Tibial artery (tissue), 4 donors: ENCODE measurements at regions of chr2 and their contacts with region 1.

Region 1: DNA sequence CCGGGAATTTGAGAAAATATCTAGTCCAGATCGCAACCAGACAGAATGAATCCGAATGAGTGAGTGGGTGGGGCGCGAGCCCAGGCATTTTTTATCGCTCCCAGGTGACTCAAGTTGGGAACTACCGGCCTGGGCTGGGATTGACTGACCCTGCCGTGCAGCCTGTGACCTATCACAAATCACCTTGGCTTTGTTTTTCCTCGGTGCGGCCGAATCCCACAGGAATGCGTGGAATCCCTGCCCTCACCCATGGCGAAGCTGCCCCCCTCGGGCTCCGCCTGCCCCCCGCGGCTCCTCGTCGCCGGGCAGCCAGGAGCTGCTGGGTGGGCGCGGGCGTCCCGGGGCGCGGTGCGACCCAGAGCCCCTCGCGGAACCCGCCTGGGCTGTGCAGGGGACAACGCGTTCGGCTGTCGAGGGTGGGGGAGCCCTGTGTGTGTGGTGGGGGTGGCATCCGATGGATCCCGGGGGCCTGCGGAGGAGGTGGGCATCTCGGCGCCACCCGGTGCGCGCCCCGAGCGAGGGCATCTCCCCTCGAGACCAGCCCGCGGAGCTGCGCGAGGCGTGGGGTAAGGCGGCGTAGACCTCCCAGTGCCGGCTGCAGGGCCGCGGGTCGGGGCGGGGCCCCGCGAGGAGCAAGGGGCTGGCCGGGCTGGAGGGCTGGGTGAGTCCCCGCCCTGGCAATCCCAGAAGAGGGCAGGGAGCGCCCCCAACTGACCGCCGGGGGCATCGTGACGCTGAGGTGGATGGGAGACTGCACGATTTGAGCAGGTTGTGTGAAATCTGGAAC is 16.5 kb downstream of the B3GNT7 start:
- DNase-seq: peak; percentile 85 to 91
- H3K4me3 ChIP-seq: peak overlapping the region; percentile 62 to 64
- H3K27ac ChIP-seq: peak overlapping the region; percentile 74
- H3K4me1 ChIP-seq: peaks cover 0 to 16% (median 11%) of the 10 kb centered on the region in 4 donors
- H3K27me3 ChIP-seq: no peaks in the 10 kb centered on the region
- CTCF ChIP-seq: peak; percentile 84 to 93

Region 2: DNA sequence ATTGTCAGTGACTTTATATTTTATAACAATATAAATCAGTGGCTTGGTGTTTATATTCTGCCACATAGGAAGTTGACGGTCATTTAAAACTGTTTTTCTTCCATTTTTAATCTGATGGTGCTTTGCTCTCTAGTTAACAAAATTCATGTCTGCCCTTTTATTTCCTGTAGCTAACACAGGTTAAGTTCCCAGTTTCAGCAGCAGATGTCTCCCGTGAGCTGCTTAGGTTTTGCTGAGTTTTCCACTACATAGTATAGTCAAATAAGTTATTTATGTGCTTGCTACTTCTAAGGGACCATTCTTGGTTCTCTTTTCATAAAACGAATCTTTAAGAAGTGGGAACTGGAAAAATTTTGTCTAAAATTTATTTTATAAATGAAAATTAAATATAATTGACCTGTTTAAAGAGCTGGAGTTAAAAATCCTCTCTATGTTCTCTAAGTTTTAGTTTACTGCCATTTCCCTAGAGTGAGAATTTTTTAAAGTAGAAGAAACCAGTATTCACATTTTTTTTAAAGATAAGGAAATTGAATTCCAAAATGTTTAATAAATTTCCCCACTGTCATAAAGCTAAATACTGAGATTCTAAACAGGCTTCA is 307.8 kb before region 1 on chr2:
- intact Hi-C with region 1: loop called (anchors 10 kb)
- DNase-seq: peak; percentile 76 to 77
- H3K4me3 ChIP-seq: no peak overlapping the region
- H3K27ac ChIP-seq: peak overlapping the region; percentile 29 to 45
- H3K4me1 ChIP-seq: peaks cover 0 to 16% (median 2%) of the 10 kb centered on the region in 4 donors
- H3K27me3 ChIP-seq: no peaks in the 10 kb centered on the region
- CTCF ChIP-seq: peak; percentile 90 to 96

Region 3: GRCh38 chr2:231238689-231239088 is 173.3 kb before region 1 on chr2:
- intact Hi-C with region 1: loop called (anchors 5 kb)
- DNase-seq: no peak
- H3K4me3 ChIP-seq: no peak overlapping the region
- H3K27ac ChIP-seq: no peak overlapping the region
- H3K4me1 ChIP-seq: no peaks in the 10 kb centered on the region
- H3K27me3 ChIP-seq: no peaks in the 10 kb centered on the region
- CTCF ChIP-seq: no peak

Region 4: GRCh38 chr2:231297108-231297908 is 114.7 kb before region 1 on chr2:
- intact Hi-C with region 1: loop called (anchors 10 kb)
- DNase-seq: peak in 1 of 2 donors; percentile 52
- H3K4me3 ChIP-seq: no peak overlapping the region
- H3K27ac ChIP-seq: no peak overlapping the region
- H3K4me1 ChIP-seq: no peaks in the 10 kb centered on the region
- H3K27me3 ChIP-seq: no peaks in the 10 kb centered on the region
- CTCF ChIP-seq: peak; percentile 49 to 53